Activated T-helper 2 cell treated with anti-CD3 and anti-CD28 coated beads, Interferon-gamma antibody, Interleukin-2, Interleukin-4, amounts not matched to agents 10 μg/mL and 5 μg/mL and 100 μg/mL, durations not matched to agents 14 hours and 24 hours and 36 hours (primary cell): ENCODE measurements at regions of chr13 and their contacts with region 1.

Region 1: DNA sequence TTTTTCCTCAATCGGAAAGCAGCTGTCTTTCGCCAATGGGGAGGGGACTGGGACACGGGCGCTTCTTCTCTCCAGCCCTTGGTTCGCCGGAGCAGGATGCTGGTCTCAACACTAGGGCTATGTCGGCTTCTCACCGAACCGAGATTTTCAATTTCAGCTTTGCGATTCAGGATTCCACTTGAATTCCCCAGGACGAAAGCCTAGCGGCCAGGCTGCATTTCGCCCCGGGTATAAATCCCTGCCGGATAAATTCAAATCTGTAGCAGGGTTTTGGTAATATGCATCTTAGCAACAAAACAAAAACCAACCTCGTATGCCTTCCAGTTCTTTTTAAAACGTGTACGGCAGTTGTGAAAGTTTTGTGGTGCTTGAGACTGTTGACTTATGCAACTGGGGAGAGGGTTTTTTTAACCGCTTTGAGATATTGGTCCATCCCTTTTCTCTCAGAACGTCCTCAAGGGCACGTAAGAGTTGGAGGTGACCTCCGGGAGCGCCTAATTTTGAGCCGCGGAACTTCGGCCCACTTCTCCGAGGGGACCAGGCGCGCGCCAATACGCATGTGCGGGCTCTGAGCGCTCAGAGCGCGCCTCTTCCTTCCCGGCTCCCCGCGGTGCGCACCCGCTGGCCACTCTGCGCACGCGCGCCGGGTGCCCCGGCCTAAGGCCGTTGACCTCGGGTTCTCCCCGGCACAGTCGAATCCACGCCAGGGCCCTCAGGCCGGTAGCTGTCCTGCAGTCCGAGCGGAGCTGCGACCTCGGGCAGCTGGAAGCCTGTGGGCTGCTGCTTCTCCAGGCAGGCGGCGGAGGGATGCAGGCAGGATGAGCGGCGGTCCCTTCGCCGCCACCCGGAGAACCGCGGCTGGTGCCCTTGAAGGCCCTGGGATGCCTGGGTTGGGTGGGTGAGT is 7.6 kb downstream of the POU4F1 start:
- DNase-seq: no peak
- H3K4me3 Mint-ChIP-seq: no peak overlapping the region
- H3K27ac Mint-ChIP-seq: no peak overlapping the region
- H3K4me1 Mint-ChIP-seq: peaks cover 14% of the 10 kb centered on the region
- H3K27me3 Mint-ChIP-seq: peaks cover 81% of the 10 kb centered on the region

Region 2: GRCh38 chr13:78137404-78138142 is 458.2 kb before region 1 on chr13:
- intact Hi-C with region 1: loop called (anchors 5 kb)
- DNase-seq: no peak
- H3K4me3 Mint-ChIP-seq: peak overlapping the region; percentile 18
- H3K27ac Mint-ChIP-seq: no peak overlapping the region
- H3K4me1 Mint-ChIP-seq: peaks cover 5% of the 10 kb centered on the region
- H3K27me3 Mint-ChIP-seq: no peaks in the 10 kb centered on the region

Region 3: DNA sequence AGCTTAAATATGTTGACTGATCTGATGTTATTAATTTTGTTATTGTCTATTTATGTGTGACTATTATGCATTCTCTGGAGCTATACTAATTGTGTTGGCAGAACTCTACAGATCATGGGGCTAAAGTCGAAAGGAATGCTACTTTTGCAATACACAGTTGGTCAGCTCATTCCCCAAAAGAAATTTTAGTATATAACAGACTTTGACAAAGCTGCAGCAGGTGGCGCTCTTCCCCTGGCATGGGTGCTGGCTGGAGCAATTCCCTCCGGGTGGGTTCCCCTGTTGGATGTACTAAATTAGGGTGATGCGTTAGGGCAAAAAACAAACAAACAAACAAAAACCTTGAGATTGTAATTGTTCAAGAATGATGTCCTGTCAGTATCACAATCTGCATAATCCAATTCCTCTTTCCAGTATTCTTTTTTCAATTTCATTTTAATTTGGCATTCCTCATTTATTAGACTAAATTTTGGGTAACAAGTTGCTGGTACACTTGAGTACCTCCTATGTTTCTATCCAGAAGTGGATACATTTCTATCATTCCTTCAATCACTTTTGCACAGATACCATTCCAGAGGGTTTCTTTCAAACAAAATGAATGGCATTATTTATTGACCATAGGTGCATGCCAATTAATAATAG is 354.3 kb before region 1 on chr13:
- intact Hi-C with region 1: loop called (anchors 10 kb)
- DNase-seq: no peak
- H3K4me3 Mint-ChIP-seq: no peak overlapping the region
- H3K27ac Mint-ChIP-seq: no peak overlapping the region
- H3K4me1 Mint-ChIP-seq: no peaks in the 10 kb centered on the region
- H3K27me3 Mint-ChIP-seq: no peaks in the 10 kb centered on the region

Region 4: GRCh38 chr13:78609464-78610205 is 13.9 kb after region 1 on chr13:
- intact Hi-C with region 1: loop called (anchors 1 kb)
- DNase-seq: no peak
- H3K4me3 Mint-ChIP-seq: peak overlapping the region; percentile 58
- H3K27ac Mint-ChIP-seq: no peak overlapping the region
- H3K4me1 Mint-ChIP-seq: peaks cover 16% of the 10 kb centered on the region
- H3K27me3 Mint-ChIP-seq: peaks cover 66% of the 10 kb centered on the region

Region 5: DNA sequence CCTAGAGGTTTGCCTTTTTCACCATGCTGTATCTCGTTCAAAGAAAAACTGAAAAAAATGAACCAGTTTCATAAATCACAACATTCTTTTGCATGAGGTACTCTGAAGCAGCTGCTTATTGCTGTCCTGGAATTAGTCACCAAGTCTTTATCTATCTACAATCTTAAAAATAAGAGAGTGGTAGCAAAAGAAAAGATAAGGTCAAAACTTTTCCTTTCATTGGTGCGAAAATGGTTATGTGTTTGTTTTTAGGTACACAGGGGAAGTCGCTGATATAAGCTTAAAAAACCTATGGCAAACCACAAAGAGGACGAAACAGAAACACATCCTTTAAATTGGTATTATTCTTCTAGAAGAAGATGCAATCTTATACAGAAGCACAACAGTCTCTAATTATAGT is 42.5 kb after region 1 on chr13:
- intact Hi-C with region 1: no loop called
- DNase-seq: no peak
- H3K4me3 Mint-ChIP-seq: no peak overlapping the region
- H3K27ac Mint-ChIP-seq: no peak overlapping the region
- H3K4me1 Mint-ChIP-seq: peaks cover 11% of the 10 kb centered on the region
- H3K27me3 Mint-ChIP-seq: no peaks in the 10 kb centered on the region